ENCODE measurements at regions of chr3 and their contacts with region 1.

Region 1: DNA sequence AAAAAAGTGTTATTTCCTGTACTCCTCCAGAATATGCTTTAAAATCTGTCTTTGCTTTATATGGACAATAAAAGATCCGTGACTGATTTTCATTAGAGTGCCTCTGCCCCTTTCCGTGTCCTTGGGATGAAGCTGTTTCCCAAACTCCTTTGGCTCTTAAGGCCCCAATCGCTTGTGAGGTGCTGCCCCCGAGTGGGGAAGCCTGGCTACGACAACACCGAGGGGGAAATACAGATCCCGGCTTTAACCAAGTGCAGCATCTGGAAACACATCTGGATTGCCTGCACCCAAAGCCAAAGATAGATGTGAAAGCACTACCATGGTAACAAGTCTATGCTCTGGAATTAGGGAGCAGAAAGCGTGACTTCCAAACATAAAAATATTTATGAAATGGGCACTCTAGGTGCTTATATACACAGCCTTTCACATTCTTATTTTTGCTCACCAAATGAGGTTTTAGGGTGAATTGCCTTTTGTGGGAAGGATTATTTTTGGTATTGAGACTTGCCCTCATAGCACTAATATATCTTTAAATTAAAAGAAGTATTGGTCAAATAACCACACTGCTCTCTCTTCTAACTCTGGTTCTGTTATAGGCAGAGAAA is 40.6 kb upstream of the ADCY5 start:
- DNase-seq: peak; percentile 68
- H3K4me3 ChIP-seq: no peak overlapping the region
- H3K27ac ChIP-seq: peak overlapping the region in 2 of 4 donors; percentile 33 to 40
- H3K4me1 ChIP-seq: peaks cover 0 to 6% (median 0%) of the 10 kb centered on the region in 4 donors
- H3K27me3 ChIP-seq: no peaks in the 10 kb centered on the region
- CTCF ChIP-seq: peak; percentile 85 to 92 (median 87)
- EP300 ChIP-seq: no peak
- POLR2A ChIP-seq: no peak

Region 2: DNA sequence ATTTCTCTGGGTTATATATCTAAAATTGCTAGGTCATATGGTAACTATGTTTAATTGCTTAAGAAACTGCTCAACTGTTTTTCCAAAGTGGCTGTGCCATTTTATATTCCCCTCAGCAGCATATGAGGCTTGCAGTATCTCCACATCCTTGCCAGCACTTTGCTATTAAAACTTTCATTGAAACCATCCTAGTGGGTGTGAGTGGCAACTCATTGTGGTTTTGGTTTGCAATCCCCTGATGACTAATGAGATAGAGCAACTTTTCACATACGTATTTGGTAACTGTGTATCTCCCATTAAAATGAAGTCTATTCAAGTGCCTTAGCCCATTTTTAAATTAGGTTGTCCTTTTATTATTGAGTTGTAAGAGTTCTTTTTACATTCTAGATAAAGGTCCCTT is 992.1 kb before region 1 on chr3:
- in situ Hi-C with region 1: no loop called
- intact Hi-C with region 1: no loop called
- DNase-seq: no peak
- H3K4me3 ChIP-seq: no peak overlapping the region
- H3K27ac ChIP-seq: no peak overlapping the region
- H3K4me1 ChIP-seq: peaks cover 0 to 20% (median 2%) of the 10 kb centered on the region in 4 donors
- H3K27me3 ChIP-seq: no peaks in the 10 kb centered on the region
- CTCF ChIP-seq: no peak
- EP300 ChIP-seq: no peak
- POLR2A ChIP-seq: no peak

Region 3: DNA sequence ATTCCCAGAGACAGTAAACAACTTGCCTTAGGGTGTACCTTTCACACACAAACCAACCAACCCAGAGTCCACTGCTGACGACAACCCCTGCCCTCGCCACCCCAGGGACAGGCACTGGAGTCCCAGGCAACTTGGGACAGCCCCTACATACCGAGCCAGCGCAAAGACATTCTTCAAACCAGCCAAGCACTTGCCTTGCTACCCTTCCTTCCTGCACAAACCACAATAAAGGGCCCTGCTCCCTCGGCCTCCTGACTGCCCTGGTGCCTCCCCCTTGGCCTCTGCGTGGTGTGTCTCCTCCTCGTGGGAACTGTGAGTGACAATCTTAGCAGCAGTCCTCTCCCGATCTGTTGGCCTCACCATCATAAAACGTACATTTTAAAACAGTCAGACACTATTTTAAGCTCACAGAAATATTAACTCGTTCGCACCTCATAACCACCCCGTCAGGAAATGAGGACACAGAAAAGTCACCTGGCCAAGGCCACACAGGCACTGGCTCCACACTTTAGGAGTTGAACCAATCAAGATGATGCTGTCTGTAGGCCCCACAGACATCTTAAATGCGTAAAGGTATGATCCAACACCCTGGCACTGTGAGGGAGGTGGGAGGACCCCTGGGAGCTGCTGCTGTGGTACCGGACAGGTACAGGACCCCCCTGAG is 154.4 kb before region 1 on chr3:
- in situ Hi-C with region 1: loop called in 2 of 4 experiments (anchors 10 to 25 kb)
- intact Hi-C with region 1: no loop called
- DNase-seq: no peak
- H3K4me3 ChIP-seq: no peak overlapping the region
- H3K27ac ChIP-seq: peak overlapping the region in 1 of 4 donors; percentile 28
- H3K4me1 ChIP-seq: peaks cover 0 to 22% (median 6%) of the 10 kb centered on the region in 4 donors
- H3K27me3 ChIP-seq: no peaks in the 10 kb centered on the region
- CTCF ChIP-seq: no peak
- EP300 ChIP-seq: no peak
- POLR2A ChIP-seq: no peak

Measured in transverse colon (tissue), 4 donors.